ENCODE measurements at regions of chr9 and their contacts with region 1.

Region 1: DNA sequence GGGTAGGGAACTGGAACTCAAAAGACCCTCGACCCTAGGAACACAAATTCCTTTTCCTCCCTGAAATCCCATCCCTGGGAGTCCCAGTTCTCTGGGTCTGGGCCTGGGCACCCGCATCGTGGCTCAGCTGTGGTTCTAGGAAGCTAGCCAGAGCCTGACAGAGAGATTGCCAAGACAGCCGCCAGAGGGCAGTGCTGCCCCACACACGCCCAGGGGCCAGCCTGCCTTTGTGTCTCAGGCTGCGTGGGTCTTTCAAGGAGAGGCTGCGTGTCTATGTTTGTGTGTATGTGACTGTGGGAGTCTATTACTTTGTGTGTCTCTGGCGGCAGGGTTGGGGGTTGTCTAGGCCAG is 32.0 kb upstream of the TTLL11 start:
- DNase-seq: peak; percentile 76
- ATAC-seq: peak; percentile 84
- H3K4me3 Mint-ChIP-seq: peak overlapping the region; percentile 38
- H3K27ac Mint-ChIP-seq: no peak overlapping the region
- H3K4me1 Mint-ChIP-seq: peaks cover 13% of the 10 kb centered on the region
- H3K27me3 Mint-ChIP-seq: peaks cover 40% of the 10 kb centered on the region
- CTCF ChIP-seq: peak; percentile 75

Region 2: DNA sequence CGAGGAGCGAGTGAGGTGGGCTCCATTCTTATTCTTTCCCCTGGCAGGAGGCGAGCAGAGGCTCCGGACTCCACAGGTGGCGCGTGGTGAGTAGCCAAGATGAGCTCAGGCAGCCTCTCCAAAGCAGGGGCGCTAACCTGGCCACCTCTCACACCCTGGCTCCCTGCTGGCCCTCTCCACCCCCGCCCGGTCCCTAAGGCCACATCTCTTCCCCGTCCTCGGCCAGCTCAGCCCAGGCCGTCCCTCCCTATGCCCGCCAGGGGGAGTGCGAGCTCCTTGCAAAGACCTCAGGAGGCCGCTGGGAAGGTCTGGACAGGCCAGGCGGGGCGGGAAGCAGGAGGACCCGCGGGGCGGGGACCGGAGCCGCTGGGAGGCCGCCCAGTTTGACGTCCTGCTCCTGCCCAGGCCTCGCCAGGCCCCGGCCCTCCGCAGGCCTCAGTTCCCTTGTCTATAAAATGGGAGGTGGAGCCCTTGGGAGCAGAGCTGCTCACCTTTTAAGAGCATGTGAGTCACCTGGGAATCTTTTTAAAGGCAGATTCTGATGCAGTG is 579.2 kb before region 1 on chr9:
- CTCF ChIA-PET with region 1: interaction called, 7 read pairs
- POLR2A ChIA-PET with region 1: no interaction called
- intact Hi-C with region 1: loop called (anchors 1 kb)
- DNase-seq: peak; percentile 68
- ATAC-seq: peak; percentile 86
- H3K4me3 Mint-ChIP-seq: no peak overlapping the region
- H3K27ac Mint-ChIP-seq: no peak overlapping the region
- H3K4me1 Mint-ChIP-seq: no peaks in the 10 kb centered on the region
- H3K27me3 Mint-ChIP-seq: peaks cover 24% of the 10 kb centered on the region
- CTCF ChIP-seq: no peak

Region 3: DNA sequence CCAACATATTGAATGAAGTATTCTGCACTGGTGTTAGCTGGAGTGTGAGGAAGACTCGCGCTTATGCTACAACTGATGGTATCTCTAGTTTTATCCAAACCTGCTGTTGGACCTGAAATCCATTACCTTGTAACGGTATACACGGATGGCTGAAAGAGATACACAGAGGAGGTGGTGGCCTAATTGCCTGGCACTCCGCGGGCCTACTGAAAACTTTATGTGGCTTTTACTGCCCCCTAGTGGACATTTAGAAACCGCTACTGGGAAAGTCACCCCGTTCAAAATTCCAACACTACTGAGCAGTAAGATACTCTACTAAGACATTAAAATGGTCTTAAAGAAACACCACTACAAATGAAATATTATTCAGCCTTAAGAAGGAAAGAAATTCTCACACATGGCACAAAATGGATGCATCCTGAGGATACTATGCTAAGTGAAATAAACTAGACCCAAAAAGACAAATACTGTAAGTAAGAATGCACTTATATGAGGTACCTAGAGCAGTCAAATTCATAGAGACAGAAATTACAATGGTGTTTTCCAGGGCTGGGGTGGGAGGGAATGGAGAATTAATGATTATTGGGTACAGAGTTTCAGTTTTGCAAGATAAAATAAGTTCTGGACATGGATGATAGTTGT is 132.4 kb before region 1 on chr9:
- CTCF ChIA-PET with region 1: no interaction called
- POLR2A ChIA-PET with region 1: no interaction called
- intact Hi-C with region 1: no loop called
- DNase-seq: no peak
- ATAC-seq: peak; percentile 80
- H3K4me3 Mint-ChIP-seq: no peak overlapping the region
- H3K27ac Mint-ChIP-seq: no peak overlapping the region
- H3K4me1 Mint-ChIP-seq: no peaks in the 10 kb centered on the region
- H3K27me3 Mint-ChIP-seq: no peaks in the 10 kb centered on the region
- CTCF ChIP-seq: peak; percentile 51

Region 4: GRCh38 chr9:122350638-122351355 is 225.7 kb after region 1 on chr9:
- CTCF ChIA-PET with region 1: interaction called, 117 read pairs
- POLR2A ChIA-PET with region 1: no interaction called
- intact Hi-C with region 1: loop called (anchors 1 kb)
- DNase-seq: peak; percentile 75
- ATAC-seq: peak; percentile 90
- H3K4me3 Mint-ChIP-seq: no peak overlapping the region
- H3K27ac Mint-ChIP-seq: no peak overlapping the region
- H3K4me1 Mint-ChIP-seq: peaks cover 8% of the 10 kb centered on the region
- H3K27me3 Mint-ChIP-seq: peaks cover 35% of the 10 kb centered on the region
- CTCF ChIP-seq: no peak

Region 5: DNA sequence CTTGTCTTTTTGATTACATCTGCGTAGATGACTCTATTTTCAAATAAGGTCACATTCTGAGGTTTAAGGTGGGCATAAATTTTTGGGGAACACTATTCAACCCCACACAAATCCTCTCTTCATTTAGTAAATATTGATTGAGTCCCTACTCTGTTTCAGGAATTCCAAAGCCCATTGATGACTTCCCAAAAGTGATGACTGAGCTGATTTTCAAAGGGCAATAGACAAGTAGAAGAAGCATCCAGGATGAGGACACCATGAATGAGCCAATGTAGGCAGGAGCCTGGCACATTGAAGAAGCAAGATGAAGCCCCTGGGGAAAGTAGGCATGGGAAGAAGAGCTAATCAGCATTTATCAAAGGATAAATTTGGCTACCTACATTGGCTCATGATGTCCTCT is 317.4 kb after region 1 on chr9:
- CTCF ChIA-PET with region 1: no interaction called
- POLR2A ChIA-PET with region 1: no interaction called
- intact Hi-C with region 1: no loop called
- DNase-seq: no peak
- ATAC-seq: no peak
- H3K4me3 Mint-ChIP-seq: no peak overlapping the region
- H3K27ac Mint-ChIP-seq: no peak overlapping the region
- H3K4me1 Mint-ChIP-seq: no peaks in the 10 kb centered on the region
- H3K27me3 Mint-ChIP-seq: peaks cover 33% of the 10 kb centered on the region
- CTCF ChIP-seq: no peak

Region 6: DNA sequence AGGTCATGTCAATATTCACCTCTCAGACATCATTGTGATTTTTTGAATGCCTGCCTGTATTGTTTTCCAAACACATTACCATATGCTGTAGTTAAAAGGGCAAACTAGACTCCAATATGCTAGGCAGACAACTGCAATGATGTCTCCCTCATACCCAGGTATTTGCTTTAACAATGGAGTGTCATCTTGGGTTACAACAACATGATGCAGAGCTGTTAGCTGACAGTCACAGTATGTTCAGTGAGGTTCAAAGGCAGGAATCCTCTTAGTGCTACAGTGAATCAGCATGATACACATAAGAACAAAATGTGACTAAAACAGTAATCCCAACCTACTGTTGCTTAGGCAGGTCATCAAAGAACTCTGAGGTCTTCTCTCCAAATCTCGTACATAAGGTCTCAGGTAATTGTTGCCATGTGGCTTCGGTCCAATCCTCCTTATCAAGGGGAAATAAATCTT is 328.6 kb after region 1 on chr9:
- CTCF ChIA-PET with region 1: interaction called, 25 read pairs
- POLR2A ChIA-PET with region 1: no interaction called
- intact Hi-C with region 1: loop called (anchors 1 kb)
- DNase-seq: no peak
- ATAC-seq: no peak
- H3K4me3 Mint-ChIP-seq: no peak overlapping the region
- H3K27ac Mint-ChIP-seq: no peak overlapping the region
- H3K4me1 Mint-ChIP-seq: no peaks in the 10 kb centered on the region
- H3K27me3 Mint-ChIP-seq: peaks cover 22% of the 10 kb centered on the region
- CTCF ChIP-seq: no peak

Region 7: DNA sequence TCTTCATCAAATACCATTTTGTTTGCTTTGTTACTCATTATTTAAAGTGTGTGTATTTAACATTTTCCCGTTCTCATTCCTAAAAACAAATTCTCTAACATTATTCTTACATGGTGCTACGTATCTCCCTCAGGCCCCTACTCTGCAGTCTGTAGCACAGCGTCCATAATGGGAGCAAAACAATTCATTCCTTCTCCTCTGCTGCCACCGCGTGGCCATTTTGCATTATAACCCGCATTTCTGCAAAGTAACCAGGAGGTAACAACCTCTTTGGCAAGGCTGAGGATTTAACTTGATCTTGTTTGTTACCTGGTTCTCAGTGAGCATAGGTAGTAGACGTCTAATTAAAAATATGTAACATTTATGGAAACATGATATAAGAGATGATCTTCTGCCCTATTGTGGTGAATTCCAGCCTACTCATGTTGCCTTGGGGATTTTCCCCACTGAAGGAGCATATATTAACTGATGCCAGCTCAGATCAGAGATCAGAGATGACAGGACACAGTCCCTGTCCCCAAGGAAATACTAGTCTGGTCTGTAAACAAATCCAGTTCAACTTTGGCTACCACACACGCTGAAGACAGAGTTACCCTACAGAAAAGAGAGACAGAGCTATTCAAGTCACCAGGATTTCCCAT is 685.3 kb after region 1 on chr9:
- CTCF ChIA-PET with region 1: interaction called, 15 read pairs
- POLR2A ChIA-PET with region 1: no interaction called
- intact Hi-C with region 1: loop called (anchors 1 kb)
- DNase-seq: peak; percentile 54
- ATAC-seq: peak; percentile 88
- H3K4me3 Mint-ChIP-seq: no peak overlapping the region
- H3K27ac Mint-ChIP-seq: no peak overlapping the region
- H3K4me1 Mint-ChIP-seq: peaks cover 9% of the 10 kb centered on the region
- H3K27me3 Mint-ChIP-seq: no peaks in the 10 kb centered on the region
- CTCF ChIP-seq: no peak

Region 8: GRCh38 chr9:123389070-123389469 is 1263.9 kb after region 1 on chr9:
- CTCF ChIA-PET with region 1: no interaction called
- POLR2A ChIA-PET with region 1: no interaction called
- intact Hi-C with region 1: loop called (anchors 1 kb)
- DNase-seq: no peak
- ATAC-seq: no peak
- H3K4me3 Mint-ChIP-seq: no peak overlapping the region
- H3K27ac Mint-ChIP-seq: no peak overlapping the region
- H3K4me1 Mint-ChIP-seq: no peaks in the 10 kb centered on the region
- H3K27me3 Mint-ChIP-seq: no peaks in the 10 kb centered on the region
- CTCF ChIP-seq: no peak